ENCODE measurements at regions of chr6 and their contacts with region 1.

Region 1: GRCh38 chr6:32785781-32786533 is 22.6 kb upstream of the HLA-DQB2 start:
- DNase-seq: no peak
- H3K4me3 ChIP-seq: no peak overlapping the region
- H3K27ac ChIP-seq: no peak overlapping the region
- H3K27me3 ChIP-seq: peaks cover 9% of the 10 kb centered on the region
- CTCF ChIP-seq: peak; percentile 66

Region 2: DNA sequence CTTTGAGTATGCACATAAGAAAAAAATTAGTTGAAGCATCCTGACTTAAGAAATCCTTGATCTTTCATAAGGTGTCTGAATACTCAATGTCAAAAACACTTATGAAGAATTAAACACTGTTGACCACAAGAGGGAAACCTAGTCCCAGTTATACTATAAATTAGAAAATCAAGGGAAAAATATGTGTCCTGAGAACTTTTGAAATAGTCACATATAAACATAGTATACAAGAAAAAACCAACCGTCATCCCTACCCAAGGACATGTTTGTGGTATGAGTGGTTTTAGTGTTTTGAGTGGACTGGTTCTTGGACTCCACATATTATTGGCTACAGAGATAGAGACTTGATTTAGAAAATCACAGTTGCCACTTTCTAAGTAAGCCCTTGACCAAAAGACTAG is 353.9 kb before region 1 on chr6:
- CTCF ChIA-PET with region 1: interaction called, 14 read pairs
- POLR2A ChIA-PET with region 1: no interaction called
- DNase-seq: no peak
- H3K4me3 ChIP-seq: no peak overlapping the region
- H3K27ac ChIP-seq: no peak overlapping the region
- H3K27me3 ChIP-seq: no peaks in the 10 kb centered on the region
- CTCF ChIP-seq: peak; percentile 30

Region 3: DNA sequence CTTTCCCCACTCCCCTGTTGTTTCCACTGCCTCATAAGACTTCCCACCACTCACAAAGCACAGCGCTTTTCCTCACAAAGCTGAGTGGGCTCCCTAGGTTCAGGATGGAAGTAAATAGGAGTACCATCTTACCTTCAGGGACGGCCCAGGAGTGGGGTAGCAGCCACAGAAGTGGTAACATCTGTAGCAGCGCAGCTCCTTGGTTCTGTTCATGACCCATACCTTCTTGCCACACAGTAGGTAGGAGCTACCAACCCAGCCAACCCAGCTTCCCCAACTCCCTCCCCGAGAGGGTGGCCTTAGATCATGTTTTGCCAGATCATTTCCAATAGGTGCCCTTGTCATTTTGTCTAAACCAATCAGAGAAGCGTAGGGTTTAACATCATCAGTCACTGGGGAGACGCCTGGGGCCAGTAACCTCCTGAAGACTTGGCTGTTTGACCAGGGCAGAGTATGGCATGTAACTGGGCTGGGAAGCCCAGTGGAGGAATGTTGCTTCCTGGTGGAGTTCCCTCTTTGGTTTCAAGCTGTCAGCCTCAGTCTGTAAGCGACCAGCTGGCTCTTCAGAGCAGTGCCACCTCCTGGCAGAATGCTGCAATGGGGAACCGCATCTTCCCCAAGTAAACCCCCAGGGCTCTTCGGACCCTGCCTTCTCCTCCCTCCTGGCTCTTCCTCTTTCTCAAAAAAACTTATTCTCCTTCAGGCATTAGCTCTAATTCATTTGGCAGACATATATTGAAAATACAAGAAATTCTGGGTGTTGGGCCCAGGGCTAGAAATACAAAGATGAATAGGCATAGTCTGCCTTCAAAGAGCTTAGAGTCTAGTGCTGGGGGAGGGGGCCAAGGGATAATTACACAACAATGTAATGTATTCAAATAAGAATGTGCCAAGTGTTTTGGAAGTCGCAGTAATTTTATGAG is 167.1 kb after region 1 on chr6 and contains the start of gene HLA-DMA:
- CTCF ChIA-PET with region 1: no interaction called
- POLR2A ChIA-PET with region 1: no interaction called
- DNase-seq: peak; percentile 80
- H3K4me3 ChIP-seq: peak within 1 kb of the TSS; percentile 29
- H3K27ac ChIP-seq: no peak within 1 kb of the TSS
- H3K27me3 ChIP-seq: no peaks in the 10 kb centered on the region
- CTCF ChIP-seq: peak; percentile 82
- polyA plus RNA-seq, gene HLA-DMA: 7.1 and 8.2 TPM in 2 replicates